ENCODE measurements at regions of chr2 and their contacts with region 1.

Region 1: DNA sequence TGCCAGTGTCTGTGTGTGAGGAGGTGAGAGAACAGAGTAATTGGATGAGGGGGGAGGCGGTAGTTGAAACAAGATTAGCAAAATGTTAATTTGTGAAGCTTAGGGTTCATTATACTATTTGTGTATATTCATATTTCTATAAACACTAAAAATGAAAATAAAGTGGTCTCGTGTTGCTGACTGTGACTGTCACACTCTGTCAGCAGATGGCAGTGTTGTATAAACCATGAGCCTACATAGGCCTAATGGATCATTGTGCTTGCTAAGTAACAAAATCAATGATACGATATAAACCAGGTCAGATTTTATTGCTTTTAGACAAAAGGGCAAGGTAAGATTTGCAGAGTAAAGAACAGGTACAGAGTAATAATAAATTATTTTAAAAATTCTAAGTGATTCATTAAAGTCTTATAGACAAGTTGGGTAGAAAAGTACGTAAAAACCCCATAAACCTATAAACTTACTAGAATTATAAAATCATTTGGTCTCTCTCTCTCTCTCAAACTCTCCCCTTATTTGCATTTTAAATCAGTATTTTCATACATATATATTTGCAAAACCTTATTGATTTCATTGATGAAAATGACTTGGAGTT is 182.7 kb downstream of the RPIA start:
- DNase-seq: peak; percentile 70
- ATAC-seq: no peak
- H3K4me3 ChIP-seq: no peak overlapping the region
- H3K4me3 Mint-ChIP-seq: no peak overlapping the region
- H3K27ac ChIP-seq: no peak overlapping the region
- H3K27ac Mint-ChIP-seq: no peak overlapping the region
- H3K4me1 ChIP-seq: peaks cover 15 to 21% of the 10 kb centered on the region in 2 donors
- H3K4me1 Mint-ChIP-seq: peaks cover 27% of the 10 kb centered on the region
- H3K27me3 ChIP-seq: no peaks in the 10 kb centered on the region
- H3K27me3 Mint-ChIP-seq: no peaks in the 10 kb centered on the region
- CTCF ChIP-seq: peak; percentile 64

Region 2: GRCh38 chr2:88321449-88322248 is 552.5 kb before region 1 on chr2:
- CTCF ChIA-PET with region 1: no interaction called
- POLR2A ChIA-PET with region 1: no interaction called
- intact Hi-C with region 1: no loop called
- DNase-seq: no peak
- ATAC-seq: no peak
- H3K4me3 ChIP-seq: no peak overlapping the region
- H3K4me3 Mint-ChIP-seq: no peak overlapping the region
- H3K27ac ChIP-seq: no peak overlapping the region
- H3K27ac Mint-ChIP-seq: no peak overlapping the region
- H3K4me1 ChIP-seq: no peaks in the 10 kb centered on the region
- H3K4me1 Mint-ChIP-seq: no peaks in the 10 kb centered on the region
- H3K27me3 ChIP-seq: peaks cover 0 to 2% (median 0%) of the 10 kb centered on the region in 4 experiments
- H3K27me3 Mint-ChIP-seq: peaks cover 24% of the 10 kb centered on the region
- CTCF ChIP-seq: no peak

Region 3: DNA sequence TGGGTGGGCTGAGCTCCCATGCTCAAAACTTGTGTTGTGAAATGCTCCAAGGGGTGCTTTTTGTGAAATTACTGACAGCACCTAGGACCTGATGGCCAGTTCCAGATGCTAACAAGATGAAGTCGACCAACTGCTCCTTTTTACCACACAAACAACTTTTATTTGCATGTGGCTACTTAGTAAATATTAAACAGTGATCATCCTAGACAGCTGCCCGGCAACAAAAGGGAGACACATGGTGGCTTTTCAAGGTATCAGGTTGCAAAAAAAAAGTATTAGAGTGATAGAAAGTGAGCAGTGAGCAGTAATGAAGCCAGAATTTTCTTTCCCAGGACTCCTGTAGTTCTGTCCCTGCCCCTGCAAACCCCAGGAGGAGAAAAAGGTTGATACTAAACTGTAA is 64.1 kb before region 1 on chr2:
- CTCF ChIA-PET with region 1: no interaction called
- POLR2A ChIA-PET with region 1: no interaction called
- intact Hi-C with region 1: no loop called
- DNase-seq: no peak
- ATAC-seq: no peak
- H3K4me3 ChIP-seq: no peak overlapping the region
- H3K4me3 Mint-ChIP-seq: no peak overlapping the region
- H3K27ac ChIP-seq: no peak overlapping the region
- H3K27ac Mint-ChIP-seq: no peak overlapping the region
- H3K4me1 ChIP-seq: no peaks in the 10 kb centered on the region
- H3K4me1 Mint-ChIP-seq: no peaks in the 10 kb centered on the region
- H3K27me3 ChIP-seq: no peaks in the 10 kb centered on the region
- H3K27me3 Mint-ChIP-seq: no peaks in the 10 kb centered on the region
- CTCF ChIP-seq: no peak

Region 4: GRCh38 chr2:88919087-88919738 is 45.1 kb after region 1 on chr2:
- CTCF ChIA-PET with region 1: interaction called, 5 read pairs
- POLR2A ChIA-PET with region 1: no interaction called
- intact Hi-C with region 1: loop called (anchors 2 kb)
- DNase-seq: peak; percentile 29
- ATAC-seq: no peak
- H3K4me3 ChIP-seq: no peak overlapping the region
- H3K4me3 Mint-ChIP-seq: no peak overlapping the region
- H3K27ac ChIP-seq: no peak overlapping the region
- H3K27ac Mint-ChIP-seq: no peak overlapping the region
- H3K4me1 ChIP-seq: peaks cover 0 to 3% of the 10 kb centered on the region in 2 donors
- H3K4me1 Mint-ChIP-seq: peaks cover 4% of the 10 kb centered on the region
- H3K27me3 ChIP-seq: no peaks in the 10 kb centered on the region
- H3K27me3 Mint-ChIP-seq: no peaks in the 10 kb centered on the region
- CTCF ChIP-seq: peak; percentile 53

Measured in B cell (primary cell).